HEK293 (cell line): ENCODE measurements at regions of chr16 and their contacts with region 1.

Region 1: GRCh38 chr16:81261049-81261648 is 22.7 kb downstream of the BCO1 start:
- H3K4me3 ChIP-seq: no peak overlapping the region
- H3K27ac ChIP-seq: no peak overlapping the region
- H3K4me1 ChIP-seq: no peaks in the 10 kb centered on the region
- CTCF ChIP-seq: no peak

Region 2: DNA sequence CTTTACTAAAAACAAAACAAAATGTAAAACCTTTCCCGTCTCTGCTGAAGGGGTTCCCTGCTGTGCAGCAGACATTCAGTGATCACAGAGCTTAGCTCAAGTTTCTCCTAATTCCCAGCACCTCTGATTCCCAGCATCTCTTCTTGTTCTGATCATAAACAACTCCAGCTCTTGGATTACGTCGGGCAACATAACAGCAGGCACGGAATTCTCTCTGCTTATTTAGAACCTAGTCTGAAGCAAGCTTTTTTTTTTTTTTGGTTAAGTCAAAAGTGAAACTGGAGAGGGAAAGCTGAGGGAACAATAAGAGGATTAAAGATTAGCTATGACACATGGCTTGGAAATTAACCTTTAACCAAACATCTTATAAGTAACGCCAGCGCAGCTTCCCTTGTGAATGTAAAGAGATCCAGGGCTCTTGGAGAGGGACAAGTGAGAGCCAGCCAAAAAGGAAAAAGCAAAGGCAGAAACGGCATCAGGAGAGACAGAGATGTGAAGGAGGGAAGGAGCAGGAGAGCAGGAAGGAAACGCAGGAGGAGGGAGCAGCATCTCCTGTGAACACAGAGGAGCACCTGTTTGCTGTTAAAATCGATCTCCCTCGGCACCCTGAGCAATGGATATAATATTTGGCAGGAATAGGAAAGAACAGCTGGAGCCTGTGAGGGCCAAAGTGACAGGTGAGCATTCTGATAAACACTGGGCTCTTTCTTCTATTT is 22.7 kb before region 1 on chr16 and contains the start of gene BCO1:
- CTCF ChIA-PET with region 1: interaction called, 10 read pairs
- POLR2A ChIA-PET with region 1: no interaction called
- H3K4me3 ChIP-seq: peak within 1 kb of the TSS; percentile 16
- H3K27ac ChIP-seq: 0 out of 2 replicates have a peak within 1 kb of the TSS, but pooled peaks have one; percentile 19
- H3K4me1 ChIP-seq: no peaks in the 10 kb centered on the region
- CTCF ChIP-seq: no peak